ENCODE measurements at regions of chr9 and their contacts with region 1.

Region 1: GRCh38 chr9:129835021-129835871 is at the starts of genes C9orf78 and USP20:
- DNase-seq: peak; percentile 98
- total RNA-seq, gene C9orf78: 30.7 TPM
- total RNA-seq, gene USP20: 16.0 TPM

Region 2: DNA sequence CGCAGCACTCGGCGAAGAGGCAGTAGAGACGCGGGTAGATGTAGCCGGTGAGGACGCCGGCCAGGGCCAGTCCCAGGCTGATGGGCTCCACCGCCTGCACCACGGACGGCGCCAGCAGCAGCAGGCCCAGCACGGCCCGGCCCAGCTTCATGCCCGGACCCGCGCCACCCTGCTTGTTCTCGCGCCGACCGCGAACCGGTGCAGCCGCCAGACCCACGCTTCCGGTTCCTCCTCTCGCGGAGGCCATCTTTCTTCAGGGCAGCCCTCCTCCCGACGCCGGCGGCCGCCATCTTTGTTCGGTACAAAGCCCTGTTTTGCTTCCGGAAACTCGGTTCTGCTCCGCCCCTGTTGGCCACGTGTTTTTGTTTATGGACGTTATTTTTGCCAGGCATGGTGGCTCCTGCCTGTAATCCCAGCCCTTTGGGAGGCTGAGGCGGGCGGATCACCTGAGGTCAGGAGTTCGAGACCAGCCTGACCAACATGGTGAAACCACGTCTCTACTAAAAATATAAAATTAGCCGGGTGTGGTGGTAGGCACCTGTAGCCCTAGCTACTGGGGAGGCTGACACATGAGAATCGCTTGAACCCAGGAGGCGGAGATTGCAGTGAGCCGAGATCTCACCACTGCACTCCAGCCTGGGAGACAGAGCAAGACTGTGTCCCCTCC is 11.2 kb before region 1 on chr9 and contains the start of gene TOR1A:
- intact Hi-C with region 1: loop called (anchors 1 kb)
- DNase-seq: peak; percentile 98
- total RNA-seq, gene TOR1A: 14.0 TPM

Measured in cardiac septum (tissue), 1 donor.